Activated naive CD4-positive, alpha-beta T cell treated with anti-CD3 and anti-CD28 coated beads for 36 hours (primary cell): ENCODE measurements at regions of chr7 and their contacts with region 1.

Region 1: GRCh38 chr7:142853739-142854371 is 1.0 kb upstream of the EPHB6 start:
- DNase-seq: peak; percentile 74
- H3K4me3 Mint-ChIP-seq: peak overlapping the region; percentile 91
- H3K27ac Mint-ChIP-seq: peak overlapping the region; percentile 79
- H3K4me1 Mint-ChIP-seq: peaks cover 31% of the 10 kb centered on the region
- H3K27me3 Mint-ChIP-seq: no peaks in the 10 kb centered on the region

Region 2: GRCh38 chr7:141975806-141976523 is 877.9 kb before region 1 on chr7:
- CTCF ChIA-PET with region 1: no interaction called
- intact Hi-C with region 1: loop called (anchors 5 kb)
- DNase-seq: peak; percentile 88
- H3K4me3 Mint-ChIP-seq: peak overlapping the region; percentile 76
- H3K27ac Mint-ChIP-seq: peak overlapping the region; percentile 28
- H3K4me1 Mint-ChIP-seq: peaks cover 18% of the 10 kb centered on the region
- H3K27me3 Mint-ChIP-seq: no peaks in the 10 kb centered on the region

Region 3: DNA sequence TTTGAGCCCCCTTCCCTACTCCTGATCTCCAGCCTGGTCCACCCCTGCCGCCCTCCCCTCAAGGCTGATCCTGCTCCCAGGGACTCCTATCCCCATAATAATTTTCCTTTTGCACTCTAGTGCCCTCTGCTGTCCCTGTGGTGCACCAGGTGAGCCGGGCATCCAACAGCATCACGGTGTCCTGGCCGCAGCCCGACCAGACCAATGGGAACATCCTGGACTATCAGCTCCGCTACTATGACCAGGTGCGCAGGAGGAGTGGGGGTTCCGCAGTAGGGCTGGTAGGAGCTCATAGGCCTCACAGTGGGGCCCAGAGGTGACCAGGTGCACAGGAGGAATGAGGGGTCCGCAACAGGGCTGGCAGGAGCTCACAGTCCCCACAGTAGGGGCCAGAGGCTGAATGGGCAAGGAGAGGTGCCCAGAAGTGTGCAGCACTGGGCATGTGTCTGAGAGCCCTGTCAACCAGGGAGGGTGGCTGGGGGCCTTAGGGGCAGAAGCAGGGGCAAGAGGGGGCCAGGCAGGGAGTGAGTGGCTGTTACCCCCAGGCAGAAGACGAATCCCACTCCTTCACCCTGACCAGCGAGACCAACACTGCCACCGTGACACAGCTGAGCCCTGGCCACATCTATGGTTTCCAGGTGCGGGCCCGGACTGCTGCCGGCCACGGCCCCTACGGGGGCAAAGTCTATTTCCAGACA is 12.7 kb after region 1 on chr7:
- CTCF ChIA-PET with region 1: interaction called, 7 read pairs
- intact Hi-C with region 1: loop called (anchors 1 kb)
- DNase-seq: peak; percentile 27
- H3K4me3 Mint-ChIP-seq: no peak overlapping the region
- H3K27ac Mint-ChIP-seq: peak overlapping the region; percentile 46
- H3K4me1 Mint-ChIP-seq: peaks cover 2% of the 10 kb centered on the region
- H3K27me3 Mint-ChIP-seq: no peaks in the 10 kb centered on the region

Region 4: DNA sequence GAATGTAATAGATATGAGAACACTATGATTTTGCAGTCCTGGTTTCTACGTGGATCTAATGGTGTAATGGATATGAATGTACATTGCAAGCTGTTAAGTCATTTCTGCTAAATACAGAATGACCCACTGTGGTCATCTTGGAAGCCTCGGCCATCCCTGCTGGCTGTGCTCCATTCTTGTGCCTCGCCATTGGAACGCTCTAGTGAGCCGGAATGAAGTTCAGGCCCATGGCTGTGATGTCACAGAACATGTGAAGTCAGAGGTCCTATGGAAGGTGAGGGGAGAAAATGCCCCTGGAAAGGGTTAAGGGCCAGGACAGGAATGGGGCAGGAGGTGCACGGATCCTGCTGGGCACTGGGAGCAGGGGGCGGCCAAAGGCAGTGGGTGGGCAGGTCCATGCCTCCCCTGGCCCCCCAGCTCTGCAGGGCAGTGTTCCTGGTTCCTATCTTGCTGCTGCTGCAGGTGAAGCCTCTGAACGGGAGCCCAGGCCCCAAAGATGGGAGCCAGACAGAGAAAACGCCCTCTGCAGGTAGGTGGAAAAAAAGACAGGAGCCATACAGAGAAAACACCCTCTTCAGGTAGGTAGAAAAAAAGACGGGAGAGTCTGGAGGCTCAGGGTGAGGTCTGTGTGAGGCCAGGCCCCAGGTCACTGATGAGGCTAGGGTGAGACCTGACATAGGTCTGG is 85.5 kb after region 1 on chr7 and contains the start of gene LLCFC1:
- CTCF ChIA-PET with region 1: no interaction called
- intact Hi-C with region 1: loop called (anchors 1 kb)
- DNase-seq: peak; percentile 20
- H3K4me3 Mint-ChIP-seq: no peak within 1 kb of the TSS
- H3K27ac Mint-ChIP-seq: no peak within 1 kb of the TSS
- H3K4me1 Mint-ChIP-seq: no peaks in the 10 kb centered on the region
- H3K27me3 Mint-ChIP-seq: no peaks in the 10 kb centered on the region
- total RNA-seq, gene LLCFC1: not detected

Region 5: GRCh38 chr7:143287935-143288826 is 434.3 kb after region 1 on chr7 and contains the start of gene CASP2:
- CTCF ChIA-PET with region 1: no interaction called
- intact Hi-C with region 1: loop called (anchors 2 kb)
- DNase-seq: peak; percentile 99
- H3K4me3 Mint-ChIP-seq: peak within 1 kb of the TSS; percentile 96
- H3K27ac Mint-ChIP-seq: peak within 1 kb of the TSS; percentile 88
- H3K4me1 Mint-ChIP-seq: peaks cover 48% of the 10 kb centered on the region
- H3K27me3 Mint-ChIP-seq: no peaks in the 10 kb centered on the region
- total RNA-seq, gene CASP2: 116 to 124 TPM